ENCODE measurements at regions of chr15 and their contacts with region 1.

Region 1: DNA sequence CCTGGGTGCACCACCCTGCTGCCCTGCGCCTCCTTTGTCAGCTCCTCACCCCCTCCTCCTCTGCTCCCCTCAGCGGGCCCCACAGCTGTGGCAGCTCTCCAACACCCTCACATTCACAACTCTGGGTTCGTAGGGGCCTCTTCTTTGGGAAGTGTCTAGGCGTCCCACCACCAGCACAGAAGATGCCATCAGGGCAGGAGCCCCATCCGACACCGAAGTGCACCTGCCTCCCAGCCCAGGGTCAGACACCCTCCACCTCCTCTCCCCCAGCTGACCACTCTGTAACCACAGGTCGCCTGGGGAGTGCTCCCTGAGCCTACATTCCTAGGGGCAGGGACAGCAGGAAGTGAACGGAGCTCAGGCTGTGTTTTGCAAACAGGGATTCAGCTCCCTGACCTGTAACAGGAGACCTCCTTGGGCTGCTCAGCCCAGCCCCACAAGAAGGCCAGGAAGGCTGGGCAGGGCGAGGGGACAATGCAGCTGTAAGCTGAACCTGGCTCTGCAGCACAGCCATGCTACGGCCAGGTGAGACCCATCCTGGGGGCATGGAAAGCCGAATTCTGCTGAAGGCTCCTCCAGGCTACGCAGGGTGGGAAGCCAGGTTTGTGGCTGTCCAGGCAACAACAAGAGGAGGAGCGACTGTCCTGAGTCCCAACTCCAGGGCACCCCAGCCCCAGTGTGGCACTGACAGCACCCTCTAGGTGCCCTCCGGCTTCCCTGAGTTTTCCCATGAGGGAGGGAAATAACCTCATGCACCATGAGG is 269.0 kb downstream of the GOLGA6L6 start:
- DNase-seq: no peak
- H3K4me3 ChIP-seq: no peak overlapping the region
- H3K4me1 ChIP-seq: no peaks in the 10 kb centered on the region
- H3K27me3 ChIP-seq: no peaks in the 10 kb centered on the region

Region 2: DNA sequence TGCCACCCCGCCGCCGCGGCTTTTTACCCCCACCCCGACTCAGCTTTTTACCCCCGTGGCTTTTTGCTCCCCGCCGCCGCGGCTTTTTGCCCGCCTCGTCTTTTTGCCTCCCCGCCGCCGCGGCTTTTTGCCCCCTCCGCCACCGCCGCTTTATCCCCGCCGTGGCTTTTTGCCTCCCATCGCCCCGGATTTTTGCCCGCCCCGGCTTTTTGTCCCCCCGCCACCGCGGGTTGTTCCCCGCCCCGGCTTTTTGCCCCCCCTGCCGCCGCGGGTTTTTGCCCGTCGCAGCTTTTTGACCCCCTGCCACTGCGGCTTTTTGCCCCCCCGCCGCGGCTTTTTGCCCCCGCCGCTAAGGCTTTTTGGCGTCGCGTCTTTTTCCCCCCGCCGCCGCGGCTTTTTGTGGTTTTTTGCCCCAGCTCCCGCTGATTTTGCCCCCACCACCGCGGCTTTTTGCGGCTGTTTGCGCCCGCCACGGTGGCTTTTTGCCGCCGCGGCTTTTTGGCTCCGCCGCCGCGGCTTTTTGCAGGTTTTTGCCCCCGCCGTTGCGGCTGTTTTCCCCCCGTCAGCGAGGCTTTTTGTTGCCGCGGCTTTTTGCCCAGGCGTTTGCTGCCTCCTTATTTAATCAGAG is 328.2 kb before region 1 on chr15:
- in situ Hi-C with region 1: no loop called
- DNase-seq: no peak
- H3K4me3 ChIP-seq: no peak overlapping the region
- H3K4me1 ChIP-seq: no peaks in the 10 kb centered on the region
- H3K27me3 ChIP-seq: no peaks in the 10 kb centered on the region

Region 3: GRCh38 chr15:20340931-20341661 is 68.5 kb after region 1 on chr15:
- in situ Hi-C with region 1: no loop called
- DNase-seq: no peak
- H3K4me3 ChIP-seq: no peak overlapping the region
- H3K4me1 ChIP-seq: no peaks in the 10 kb centered on the region
- H3K27me3 ChIP-seq: no peaks in the 10 kb centered on the region

Region 4: GRCh38 chr15:20386198-20386597 is 113.6 kb after region 1 on chr15:
- in situ Hi-C with region 1: loop called (anchors 10 kb)
- DNase-seq: no peak
- H3K4me3 ChIP-seq: no peak overlapping the region
- H3K4me1 ChIP-seq: no peaks in the 10 kb centered on the region
- H3K27me3 ChIP-seq: no peaks in the 10 kb centered on the region